AG04449 (cell line): ENCODE measurements at regions of chr7 and their contacts with region 1.

Region 1: DNA sequence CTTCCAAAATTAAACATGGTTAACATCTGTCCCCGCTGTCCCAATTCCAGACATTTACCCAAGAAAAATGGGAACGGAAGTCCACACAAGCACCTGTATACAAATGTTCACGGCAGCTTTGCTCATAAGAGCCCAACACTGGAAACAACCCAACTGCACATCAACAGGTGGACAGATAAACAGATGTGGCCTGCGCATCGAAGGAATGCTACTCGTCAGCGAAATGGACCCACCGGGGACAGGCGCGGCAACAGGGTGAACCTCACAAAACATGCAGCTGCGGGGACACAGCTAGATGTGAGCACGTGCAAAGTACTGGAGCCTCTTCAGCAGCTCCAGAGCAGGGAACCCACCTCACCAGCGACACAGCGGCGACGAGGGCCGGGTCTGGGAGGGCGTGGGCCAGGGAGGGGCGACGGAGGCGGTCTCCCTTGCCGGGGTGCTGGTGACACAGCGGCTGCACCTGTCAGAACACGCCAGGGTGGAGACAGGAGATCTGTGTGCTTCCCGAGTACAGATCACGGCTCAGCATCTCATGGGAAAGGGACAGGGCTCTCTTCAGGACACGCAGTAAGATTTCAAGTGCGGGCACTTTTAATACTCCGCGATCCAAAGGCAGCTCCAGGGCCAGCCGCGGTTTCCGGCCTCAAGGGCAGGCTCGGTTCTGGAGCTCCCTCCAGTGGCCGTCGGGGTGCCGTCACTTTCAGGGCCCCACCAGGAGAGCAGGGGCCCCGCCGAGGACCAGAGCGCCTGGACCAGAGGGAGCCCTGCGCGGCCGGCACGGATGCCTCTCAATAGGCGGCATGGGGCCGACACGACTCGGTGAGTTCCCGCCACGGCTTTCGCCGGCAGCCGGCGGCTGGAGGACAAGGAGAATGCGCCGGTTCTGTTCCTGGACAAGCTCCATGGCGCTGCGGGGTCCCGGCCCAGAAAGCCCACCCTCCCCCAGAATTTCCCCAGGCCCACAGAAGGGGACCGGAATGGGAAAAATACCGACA is 21.2 kb downstream of the GPR146 start:
- DNase-seq: no peak
- H3K4me3 ChIP-seq: no peak overlapping the region; the same call in 1 of the 2 replicates
- CTCF ChIP-seq: peak; percentile 90

Region 2: GRCh38 chr7:974820-975681 is 90.5 kb before region 1 on chr7 and contains the start of gene COX19:
- CTCF ChIA-PET with region 1: interaction called, 25 read pairs
- POLR2A ChIA-PET with region 1: interaction called, 3 read pairs
- DNase-seq: peak; percentile 37
- H3K4me3 ChIP-seq: peak within 1 kb of the TSS; percentile 95
- CTCF ChIP-seq: no peak

Region 3: DNA sequence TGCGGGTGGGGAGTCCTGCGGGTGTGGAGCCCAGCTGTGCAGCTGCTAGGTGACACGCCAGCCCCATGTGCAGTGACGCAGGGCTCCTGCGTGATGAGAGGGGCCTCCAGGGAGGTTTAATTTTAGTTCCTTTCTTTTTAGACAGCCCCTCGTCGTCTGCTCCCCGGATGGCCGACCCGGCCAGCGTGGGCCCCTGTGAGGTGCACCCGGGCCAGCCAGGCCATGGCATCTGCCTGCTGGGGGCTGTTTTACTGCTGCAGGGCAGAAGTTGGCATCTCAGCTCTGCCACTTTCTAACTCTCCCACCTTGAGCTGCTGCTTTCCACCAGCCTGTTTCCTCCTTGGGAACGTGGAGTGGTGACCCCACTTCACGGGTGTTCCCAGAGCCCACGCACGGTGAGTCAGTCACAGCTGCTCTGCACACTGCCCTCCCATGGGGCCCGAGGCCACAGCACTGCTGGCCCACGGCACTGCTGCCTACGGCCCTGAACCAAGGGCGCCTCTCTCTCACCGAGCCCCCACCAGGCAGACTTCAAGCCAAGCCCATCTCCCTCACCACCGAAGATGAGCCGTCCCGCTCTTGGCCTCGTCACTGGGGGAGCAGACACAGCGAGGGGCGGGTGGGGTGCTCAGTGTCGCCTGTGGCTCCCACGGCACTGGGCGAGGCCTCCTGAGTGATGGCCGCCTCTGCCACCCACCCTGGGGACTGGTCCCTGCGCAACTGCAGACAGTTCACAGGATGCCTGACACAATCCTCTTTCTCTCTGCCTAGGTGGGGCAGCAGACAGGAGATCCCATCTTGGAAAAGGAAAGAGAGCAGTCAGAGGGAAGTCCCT is 61.3 kb before region 1 on chr7:
- CTCF ChIA-PET with region 1: interaction called, 558 read pairs
- POLR2A ChIA-PET with region 1: no interaction called
- DNase-seq: no peak
- H3K4me3 ChIP-seq: no peak overlapping the region
- CTCF ChIP-seq: no peak

Region 4: GRCh38 chr7:1044191-1045068 is 21.1 kb before region 1 on chr7 and contains the start of gene GPR146:
- CTCF ChIA-PET with region 1: interaction called, 51 read pairs
- POLR2A ChIA-PET with region 1: no interaction called
- DNase-seq: peak; percentile 71
- H3K4me3 ChIP-seq: peak within 1 kb of the TSS; percentile 71
- CTCF ChIP-seq: peak; percentile 78

Region 5: DNA sequence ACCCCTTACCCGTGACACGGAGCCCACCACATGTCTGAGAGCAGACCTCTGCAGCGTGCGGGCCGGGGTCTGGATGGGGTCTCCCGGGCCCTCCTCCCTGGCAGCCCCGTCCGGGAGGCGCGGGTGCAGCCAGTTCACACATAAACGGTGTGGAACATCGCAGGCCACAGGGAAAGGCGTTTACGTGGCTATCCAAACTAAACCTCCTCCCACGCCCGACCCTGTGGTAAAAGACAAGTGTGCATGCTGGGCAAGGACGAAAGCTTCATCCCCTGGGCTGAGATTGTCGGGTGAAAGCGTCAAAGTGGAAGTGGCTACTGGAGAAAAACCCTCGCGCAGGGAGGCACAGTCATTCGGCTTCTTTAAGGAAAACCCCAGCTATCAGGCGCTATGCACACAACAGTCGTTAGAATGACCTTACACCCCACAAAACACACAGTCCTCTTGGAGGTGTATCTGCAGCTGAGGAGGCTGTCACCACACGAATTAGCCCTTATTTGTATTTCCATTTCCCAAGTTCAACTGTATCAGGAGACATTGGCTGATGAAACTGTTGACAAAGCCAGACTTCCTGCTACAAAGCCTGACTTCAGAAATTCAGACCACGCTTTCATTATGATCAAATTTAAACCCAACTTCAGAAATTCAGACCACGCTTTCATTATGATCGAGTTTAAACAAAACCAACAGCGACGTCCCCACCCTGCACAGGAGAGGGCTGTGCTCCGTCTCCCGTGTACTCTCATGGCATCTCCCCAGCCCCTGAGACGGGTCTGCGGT is 37.6 kb after region 1 on chr7:
- CTCF ChIA-PET with region 1: interaction called, 12 read pairs
- POLR2A ChIA-PET with region 1: no interaction called
- DNase-seq: no peak
- H3K4me3 ChIP-seq: no peak overlapping the region
- CTCF ChIP-seq: no peak